ENCODE measurements at regions of chr19 and their contacts with region 1.

Region 1: DNA sequence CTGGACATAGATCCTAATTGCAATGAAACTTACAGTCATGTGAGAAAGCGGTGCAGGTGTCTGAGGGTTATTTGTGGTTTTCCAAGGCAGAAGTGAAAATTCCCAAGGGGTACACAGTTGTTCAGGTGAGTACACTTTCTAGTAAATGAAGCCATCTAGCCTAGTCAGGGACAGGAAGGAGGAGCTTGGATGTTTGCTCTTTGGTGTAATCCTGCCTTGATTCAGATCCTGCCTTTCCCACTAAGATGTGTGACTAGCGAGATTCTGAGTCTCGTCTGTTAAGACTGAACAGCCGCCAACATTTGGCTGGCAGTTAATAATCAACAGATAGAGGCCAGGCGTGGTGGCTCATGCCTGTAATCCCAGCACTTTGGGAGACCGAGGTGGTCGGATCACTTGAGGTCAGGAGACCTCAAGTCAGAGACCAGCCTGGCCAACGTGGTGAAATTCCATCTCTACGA is 2.5 kb downstream of the RPS9 start:
- DNase-seq: no peak
- ATAC-seq: no peak
- H3K4me3 ChIP-seq: no peak overlapping the region
- H3K4me3 Mint-ChIP-seq: peak overlapping the region; percentile 100
- H3K27ac ChIP-seq: no peak overlapping the region
- H3K27ac Mint-ChIP-seq: peak overlapping the region; percentile 70
- H3K4me1 ChIP-seq: peaks cover 68% of the 10 kb centered on the region
- H3K4me1 Mint-ChIP-seq: peaks cover 77% of the 10 kb centered on the region
- H3K27me3 ChIP-seq: no peaks in the 10 kb centered on the region
- H3K27me3 Mint-ChIP-seq: no peaks in the 10 kb centered on the region
- CTCF ChIP-seq: no peak

Region 2: DNA sequence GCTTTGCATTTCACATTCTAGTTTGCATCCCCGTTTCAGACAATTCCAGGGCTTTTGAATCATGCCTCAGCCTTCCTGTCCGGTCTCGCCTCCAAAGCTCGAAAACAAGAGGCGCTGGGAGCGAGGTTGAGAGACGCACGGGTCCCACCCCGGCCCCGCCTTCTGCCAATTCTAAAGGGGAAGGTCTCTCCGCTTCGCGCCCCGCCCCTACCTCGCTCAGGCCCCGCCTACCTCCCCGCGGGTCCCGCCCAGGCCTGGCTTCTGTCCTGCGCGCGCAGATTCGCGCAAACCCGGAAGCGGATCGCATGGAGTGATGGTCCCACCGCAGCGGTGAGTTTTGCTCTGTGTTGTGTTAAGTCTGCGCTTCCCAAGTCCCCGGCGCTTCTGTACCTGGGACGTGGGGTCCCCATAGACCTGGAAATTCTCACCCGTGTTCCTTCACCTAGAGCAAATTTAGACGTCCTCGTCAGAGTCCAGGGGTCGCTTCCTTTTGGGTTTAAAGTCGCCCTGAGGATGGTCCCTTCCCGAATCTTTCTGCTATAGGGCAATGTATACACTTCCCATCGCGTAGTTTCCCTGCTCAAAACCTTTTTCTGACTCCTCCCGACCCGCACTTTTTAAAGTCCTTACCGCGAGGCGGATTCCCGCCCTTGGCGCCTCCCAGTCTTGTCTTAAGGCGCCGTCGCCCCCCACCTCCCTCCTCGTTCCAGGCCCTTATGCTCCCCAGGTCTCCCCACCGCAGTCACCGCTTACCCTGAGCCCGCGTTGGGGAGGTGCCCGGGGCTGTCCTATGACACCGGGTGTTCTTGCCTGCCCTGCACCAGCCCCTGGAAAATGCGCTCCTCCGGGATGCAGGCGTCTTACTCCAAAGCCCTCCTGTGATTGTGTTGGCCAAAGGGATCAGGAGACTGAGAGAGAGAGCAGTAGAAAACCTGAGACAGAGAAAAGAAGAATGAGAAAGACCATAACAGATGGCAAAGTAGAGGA is 869.4 kb before region 1 on chr19 and contains the start of gene ZNF845:
- CTCF ChIA-PET with region 1: no interaction called
- POLR2A ChIA-PET with region 1: no interaction called
- intact Hi-C with region 1: loop called in 1 of 2 experiments (anchors 5 kb)
- DNase-seq: peak; percentile 93 to 98 (median 96)
- ATAC-seq: peak; percentile 98
- H3K4me3 ChIP-seq: peak within 1 kb of the TSS; percentile 81 to 98
- H3K4me3 Mint-ChIP-seq: peak within 1 kb of the TSS; percentile 92
- H3K27ac ChIP-seq: peak within 1 kb of the TSS; percentile 66 to 83
- H3K27ac Mint-ChIP-seq: peak within 1 kb of the TSS; percentile 81
- H3K4me1 ChIP-seq: no peaks in the 10 kb centered on the region
- H3K4me1 Mint-ChIP-seq: peaks cover 31% of the 10 kb centered on the region
- H3K27me3 ChIP-seq: peaks cover 0 to 4% of the 10 kb centered on the region in 2 experiments
- H3K27me3 Mint-ChIP-seq: peaks cover 3% of the 10 kb centered on the region
- CTCF ChIP-seq: no peak
- total RNA-seq, gene ZNF845: 10.9 to 11.7 TPM

Region 3: GRCh38 chr19:54137086-54137921 is 65.9 kb before region 1 on chr19 and contains the start of gene CNOT3:
- CTCF ChIA-PET with region 1: no interaction called
- POLR2A ChIA-PET with region 1: interaction called, 9 read pairs
- intact Hi-C with region 1: loop called in 1 of 2 experiments (anchors 1 kb)
- DNase-seq: peak; percentile 95 to 100 (median 99)
- ATAC-seq: peak; percentile 76
- H3K4me3 ChIP-seq: peak within 1 kb of the TSS; percentile 55 to 74
- H3K4me3 Mint-ChIP-seq: peak within 1 kb of the TSS; percentile 88
- H3K27ac ChIP-seq: peak within 1 kb of the TSS; percentile 85 to 97
- H3K27ac Mint-ChIP-seq: peak within 1 kb of the TSS; percentile 95
- H3K4me1 ChIP-seq: peaks cover 33% of the 10 kb centered on the region
- H3K4me1 Mint-ChIP-seq: peaks cover 50% of the 10 kb centered on the region
- H3K27me3 ChIP-seq: peaks cover 0 to 3% of the 10 kb centered on the region in 2 experiments
- H3K27me3 Mint-ChIP-seq: no peaks in the 10 kb centered on the region
- CTCF ChIP-seq: no peak
- total RNA-seq, gene CNOT3: 30.8 to 42.3 TPM

Region 4: DNA sequence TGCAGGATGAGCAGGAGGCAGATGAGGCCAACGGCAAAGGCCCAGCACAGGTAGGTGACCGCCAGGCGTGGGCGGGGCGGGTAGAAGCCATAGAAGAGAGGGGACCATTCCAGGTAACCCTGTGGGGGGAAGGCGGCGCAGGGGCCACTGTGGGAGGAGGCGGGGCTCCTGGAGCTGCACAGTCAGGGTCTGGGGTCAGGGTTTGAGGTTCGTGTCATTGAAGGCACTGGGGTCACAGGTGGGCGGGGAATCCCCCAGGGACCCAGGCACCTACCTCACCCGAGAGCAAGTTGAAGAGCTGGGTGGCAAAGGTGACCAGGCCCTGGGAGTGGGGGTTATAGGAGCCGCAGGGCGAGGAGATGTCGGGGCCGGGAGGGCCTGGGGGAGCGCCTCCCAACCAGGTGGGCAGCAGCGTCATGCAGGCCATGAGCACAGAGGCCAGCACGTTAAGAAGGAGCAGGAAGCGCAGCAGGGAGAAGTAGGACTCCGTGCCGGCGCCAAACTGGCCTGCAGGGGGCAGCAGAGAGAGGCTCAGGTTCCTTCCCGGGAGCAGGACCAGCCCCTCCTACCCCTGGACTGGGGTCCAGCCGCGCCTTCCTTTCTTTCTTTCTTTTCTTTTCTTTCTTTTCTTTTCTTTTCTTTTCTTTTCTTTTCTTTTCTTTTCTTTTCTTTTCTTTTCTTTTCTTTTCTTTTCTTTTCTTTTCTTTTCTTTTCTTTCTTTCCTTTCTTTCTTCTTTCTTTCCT is 34.8 kb before region 1 on chr19:
- CTCF ChIA-PET with region 1: no interaction called
- POLR2A ChIA-PET with region 1: no interaction called
- intact Hi-C with region 1: loop called in 1 of 2 experiments (anchors 2 kb)
- DNase-seq: peak; percentile 79 to 97 (median 90)
- ATAC-seq: peak; percentile 94
- H3K4me3 ChIP-seq: no peak overlapping the region
- H3K4me3 Mint-ChIP-seq: no peak overlapping the region
- H3K27ac ChIP-seq: no peak overlapping the region
- H3K27ac Mint-ChIP-seq: no peak overlapping the region
- H3K4me1 ChIP-seq: peaks cover 15% of the 10 kb centered on the region
- H3K4me1 Mint-ChIP-seq: peaks cover 10% of the 10 kb centered on the region
- H3K27me3 ChIP-seq: peaks cover 0 to 2% of the 10 kb centered on the region in 2 experiments
- H3K27me3 Mint-ChIP-seq: no peaks in the 10 kb centered on the region
- CTCF ChIP-seq: peak; percentile 79

Region 5: DNA sequence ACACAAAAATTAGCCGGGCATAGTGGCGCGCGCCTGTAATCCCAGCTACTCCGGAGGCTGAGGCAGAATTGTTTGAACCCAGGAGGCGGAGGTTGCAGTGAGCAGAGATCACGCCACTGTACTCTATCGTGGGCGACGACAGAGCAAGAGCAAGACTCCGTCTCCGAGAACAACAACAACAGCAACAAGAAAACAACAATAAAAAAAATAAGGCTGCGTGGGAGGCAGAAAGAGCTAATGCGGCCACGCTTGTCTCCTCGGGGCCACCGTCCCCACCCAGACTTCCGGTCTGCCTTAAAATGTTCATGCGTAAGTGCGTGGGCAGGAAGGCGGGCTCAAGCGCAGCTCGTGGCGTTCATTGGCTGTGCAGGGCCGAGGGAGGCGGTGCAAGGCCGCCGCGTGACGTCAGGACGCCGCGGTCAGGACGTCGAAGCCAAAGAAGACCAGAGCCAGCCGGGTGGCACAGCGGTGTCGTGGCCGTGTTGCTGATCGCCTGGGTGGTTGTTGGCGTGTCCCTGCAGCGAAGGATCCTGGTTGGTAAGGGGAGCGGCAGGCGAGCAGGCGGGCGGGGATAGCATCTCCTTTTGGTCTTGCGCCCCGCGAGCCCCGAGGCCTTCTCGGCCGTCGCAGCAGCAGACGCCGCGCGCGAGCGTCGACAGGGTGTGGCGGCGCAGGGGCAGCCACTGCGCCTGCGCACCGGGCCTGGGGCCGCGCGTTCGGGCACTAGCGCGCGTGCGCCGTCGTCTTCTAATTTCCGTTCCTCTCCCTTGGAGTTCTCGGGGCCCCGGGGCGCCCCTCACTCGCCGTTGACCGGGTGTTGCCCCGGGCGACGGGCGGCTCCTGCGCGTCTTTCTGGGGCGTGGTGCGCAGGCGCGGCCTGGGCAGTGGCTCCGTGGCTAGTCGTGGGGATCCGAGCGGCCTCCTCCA is 245.9 kb after region 1 on chr19 and contains the start of gene LENG8:
- CTCF ChIA-PET with region 1: no interaction called
- POLR2A ChIA-PET with region 1: no interaction called
- intact Hi-C with region 1: loop called in 1 of 2 experiments (anchors 1 kb)
- DNase-seq: peak; percentile 94 to 100 (median 97)
- ATAC-seq: peak; percentile 89
- H3K4me3 ChIP-seq: peak within 1 kb of the TSS; percentile 66 to 67
- H3K4me3 Mint-ChIP-seq: peak within 1 kb of the TSS; percentile 99
- H3K27ac ChIP-seq: peak within 1 kb of the TSS; percentile 97 to 98
- H3K27ac Mint-ChIP-seq: peak within 1 kb of the TSS; percentile 99
- H3K4me1 ChIP-seq: peaks cover 39% of the 10 kb centered on the region
- H3K4me1 Mint-ChIP-seq: peaks cover 52% of the 10 kb centered on the region
- H3K27me3 ChIP-seq: no peaks in the 10 kb centered on the region
- H3K27me3 Mint-ChIP-seq: no peaks in the 10 kb centered on the region
- CTCF ChIP-seq: no peak
- total RNA-seq, gene LENG8: 514 to 558 TPM

Measured in CD8-positive, alpha-beta T cell (primary cell).